Aorta (tissue), 5 donors: ENCODE measurements at regions of chr3 and their contacts with region 1.

Region 1: DNA sequence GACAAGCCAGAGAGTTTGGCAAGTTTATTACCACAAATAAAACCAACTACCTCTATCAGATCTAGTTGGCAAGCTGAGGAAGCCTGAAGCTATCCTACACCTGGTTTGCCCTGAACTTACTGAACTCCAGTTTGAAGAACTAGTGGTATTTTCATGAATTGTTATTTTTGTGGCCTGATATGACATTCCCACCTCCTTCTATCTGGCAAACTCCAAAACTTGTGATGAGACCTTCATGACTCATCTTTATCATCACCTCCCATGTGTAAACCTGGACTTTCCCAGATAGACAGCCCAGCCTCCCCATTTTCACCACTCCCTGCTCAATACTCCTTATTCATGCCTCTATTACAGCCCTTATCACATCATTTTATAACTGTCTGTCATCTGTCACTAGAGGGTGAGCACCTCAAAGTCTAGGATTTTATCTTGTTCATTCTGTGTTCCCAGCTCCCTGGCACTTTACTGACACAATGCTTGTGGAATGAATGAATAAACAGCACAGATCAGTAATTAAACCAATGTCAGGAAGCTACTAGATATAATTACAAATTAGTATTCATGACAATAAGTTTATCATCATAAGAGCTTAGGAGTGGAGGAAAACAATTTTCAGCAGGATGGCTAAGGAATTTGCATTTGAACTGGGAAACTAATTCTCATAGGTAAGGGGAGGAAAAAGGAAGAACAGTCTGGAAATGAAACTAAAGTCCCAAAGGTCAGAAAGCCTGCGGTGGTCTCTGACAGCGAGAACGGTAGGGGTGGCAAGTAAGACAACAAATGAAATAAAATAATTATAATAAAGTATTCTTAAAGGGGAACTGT is 13.2 kb upstream of the TRANK1 start:
- DNase-seq: no peak
- ATAC-seq: no peak
- H3K4me3 ChIP-seq: no peak overlapping the region
- H3K27ac ChIP-seq: no peak overlapping the region
- H3K4me1 ChIP-seq: no peaks in the 10 kb centered on the region
- H3K27me3 ChIP-seq: no peaks in the 10 kb centered on the region

Region 2: GRCh38 chr3:36032180-36033047 is 925.7 kb before region 1 on chr3:
- intact Hi-C with region 1: no loop called
- DNase-seq: no peak
- ATAC-seq: no peak
- H3K4me3 ChIP-seq: no peak overlapping the region
- H3K27ac ChIP-seq: no peak overlapping the region
- H3K4me1 ChIP-seq: no peaks in the 10 kb centered on the region
- H3K27me3 ChIP-seq: no peaks in the 10 kb centered on the region

Region 3: GRCh38 chr3:36729204-36730056 is 228.6 kb before region 1 on chr3:
- intact Hi-C with region 1: loop called in 1 of 2 experiments (anchors 2 kb)
- DNase-seq: no peak
- ATAC-seq: peak; percentile 70
- H3K4me3 ChIP-seq: no peak overlapping the region
- H3K27ac ChIP-seq: no peak overlapping the region
- H3K4me1 ChIP-seq: no peaks in the 10 kb centered on the region
- H3K27me3 ChIP-seq: no peaks in the 10 kb centered on the region

Region 4: DNA sequence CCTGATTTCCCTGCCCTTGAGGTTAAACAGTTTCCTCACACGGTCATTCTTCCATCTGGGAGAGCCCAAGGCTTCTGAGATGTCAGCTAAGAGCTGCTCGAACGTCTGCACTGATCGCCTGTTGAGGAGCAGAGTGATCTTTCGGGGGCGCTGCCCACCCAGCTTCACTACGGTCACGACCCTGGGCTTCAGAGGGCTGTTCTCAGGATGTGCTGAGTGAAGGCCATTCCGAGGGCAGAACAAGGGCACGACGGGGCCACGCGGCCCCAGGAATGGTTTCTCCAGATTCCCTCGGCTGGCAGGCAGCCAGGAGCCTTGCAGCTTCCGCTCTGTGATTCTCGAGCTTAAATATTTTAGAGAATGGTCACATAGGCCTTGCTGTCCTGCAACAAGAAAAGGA is 219.4 kb before region 1 on chr3:
- intact Hi-C with region 1: loop called in 1 of 2 experiments (anchors 5 kb)
- DNase-seq: no peak
- ATAC-seq: no peak
- H3K4me3 ChIP-seq: no peak overlapping the region
- H3K27ac ChIP-seq: no peak overlapping the region
- H3K4me1 ChIP-seq: no peaks in the 10 kb centered on the region
- H3K27me3 ChIP-seq: no peaks in the 10 kb centered on the region

Region 5: DNA sequence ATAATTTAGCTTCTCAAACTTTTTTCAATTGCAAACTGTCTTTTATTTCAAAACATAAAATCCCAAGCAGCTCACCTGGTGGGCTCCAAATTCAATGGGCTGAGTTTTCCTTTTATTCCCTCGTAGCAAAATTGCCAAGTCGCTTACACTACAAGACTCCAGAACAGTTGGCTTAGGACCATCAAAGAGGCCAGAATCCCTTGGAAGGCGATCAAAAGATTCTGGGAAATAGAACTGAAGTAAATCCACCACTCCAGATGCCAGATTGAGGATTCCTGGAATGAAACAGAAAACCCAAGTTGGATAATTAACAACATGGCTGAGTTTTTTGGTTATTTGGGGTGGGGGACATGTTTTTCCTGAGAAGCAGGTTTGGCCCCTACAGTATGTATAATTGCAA is 106.0 kb before region 1 on chr3:
- intact Hi-C with region 1: no loop called
- DNase-seq: no peak
- ATAC-seq: no peak
- H3K4me3 ChIP-seq: no peak overlapping the region
- H3K27ac ChIP-seq: no peak overlapping the region
- H3K4me1 ChIP-seq: no peaks in the 10 kb centered on the region
- H3K27me3 ChIP-seq: no peaks in the 10 kb centered on the region

Region 6: DNA sequence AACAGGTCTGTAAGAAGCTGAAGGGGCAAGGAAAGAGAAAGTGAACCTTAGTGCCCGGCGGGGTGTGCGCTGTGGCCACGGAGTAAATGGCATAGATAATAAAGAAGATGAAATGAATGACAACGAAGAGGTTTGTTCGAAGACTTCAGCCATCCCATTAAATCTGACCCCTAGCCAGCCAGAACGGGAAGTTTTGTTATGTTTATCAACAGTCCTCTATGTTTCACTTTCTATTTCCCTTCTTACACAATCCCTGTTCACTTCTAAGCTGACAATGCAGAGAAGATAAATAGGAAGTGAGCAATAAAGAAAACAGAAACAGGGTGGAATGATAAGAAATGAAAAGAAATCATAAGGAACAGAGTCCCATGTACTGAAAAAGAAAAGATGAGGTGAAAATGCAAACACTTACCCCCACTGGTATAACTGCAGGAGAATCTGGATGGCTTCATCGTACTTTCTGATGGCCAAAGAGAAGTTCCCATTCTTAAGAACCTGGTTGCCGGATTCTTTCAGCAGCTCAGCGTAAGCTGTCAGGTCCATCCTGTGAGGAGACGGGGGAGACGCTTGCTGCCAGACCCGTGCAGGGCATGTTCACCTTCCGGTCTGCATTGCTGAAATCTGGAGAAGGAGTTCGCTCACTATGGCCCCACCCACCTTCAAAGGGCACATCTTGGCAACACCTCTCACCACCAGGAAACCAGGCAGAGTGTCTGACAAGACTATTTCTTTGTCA is 50.0 kb before region 1 on chr3:
- intact Hi-C with region 1: loop called (anchors 5 kb)
- DNase-seq: peak in 1 of 2 donors; percentile 73
- ATAC-seq: peak; percentile 83
- H3K4me3 ChIP-seq: peak overlapping the region; percentile 64 to 78
- H3K27ac ChIP-seq: no peak overlapping the region
- H3K4me1 ChIP-seq: no peaks in the 10 kb centered on the region
- H3K27me3 ChIP-seq: no peaks in the 10 kb centered on the region

Region 7: DNA sequence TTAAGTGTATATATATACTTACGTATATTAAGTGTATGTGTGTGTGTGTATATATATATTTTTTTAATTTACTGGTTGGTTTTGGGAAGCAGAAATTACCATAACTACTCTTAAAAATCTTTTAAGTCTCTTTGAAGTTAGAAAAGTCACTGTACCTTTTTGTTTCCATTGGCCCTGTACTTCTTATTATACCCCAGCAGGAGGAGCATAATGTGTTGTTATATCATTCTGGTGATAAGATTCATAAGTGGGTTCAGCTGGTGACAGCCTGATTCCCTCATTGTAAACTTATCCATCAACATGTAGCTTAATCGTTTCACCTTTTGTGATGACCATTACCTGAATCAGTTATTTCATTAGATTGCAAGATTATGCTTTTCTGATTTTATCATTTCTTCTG is 66.0 kb after region 1 on chr3:
- intact Hi-C with region 1: no loop called
- DNase-seq: no peak
- ATAC-seq: no peak
- H3K4me3 ChIP-seq: no peak overlapping the region
- H3K27ac ChIP-seq: no peak overlapping the region
- H3K4me1 ChIP-seq: peaks cover 0 to 2% of the 10 kb centered on the region in 2 donors
- H3K27me3 ChIP-seq: no peaks in the 10 kb centered on the region

Region 8: GRCh38 chr3:37210230-37210629 is 252.2 kb after region 1 on chr3:
- intact Hi-C with region 1: no loop called
- DNase-seq: no peak
- ATAC-seq: no peak
- H3K4me3 ChIP-seq: no peak overlapping the region
- H3K27ac ChIP-seq: no peak overlapping the region
- H3K4me1 ChIP-seq: peaks cover 0 to 2% of the 10 kb centered on the region in 2 donors
- H3K27me3 ChIP-seq: no peaks in the 10 kb centered on the region